ENCODE measurements at regions of chr3 and their contacts with region 1.

Region 1: DNA sequence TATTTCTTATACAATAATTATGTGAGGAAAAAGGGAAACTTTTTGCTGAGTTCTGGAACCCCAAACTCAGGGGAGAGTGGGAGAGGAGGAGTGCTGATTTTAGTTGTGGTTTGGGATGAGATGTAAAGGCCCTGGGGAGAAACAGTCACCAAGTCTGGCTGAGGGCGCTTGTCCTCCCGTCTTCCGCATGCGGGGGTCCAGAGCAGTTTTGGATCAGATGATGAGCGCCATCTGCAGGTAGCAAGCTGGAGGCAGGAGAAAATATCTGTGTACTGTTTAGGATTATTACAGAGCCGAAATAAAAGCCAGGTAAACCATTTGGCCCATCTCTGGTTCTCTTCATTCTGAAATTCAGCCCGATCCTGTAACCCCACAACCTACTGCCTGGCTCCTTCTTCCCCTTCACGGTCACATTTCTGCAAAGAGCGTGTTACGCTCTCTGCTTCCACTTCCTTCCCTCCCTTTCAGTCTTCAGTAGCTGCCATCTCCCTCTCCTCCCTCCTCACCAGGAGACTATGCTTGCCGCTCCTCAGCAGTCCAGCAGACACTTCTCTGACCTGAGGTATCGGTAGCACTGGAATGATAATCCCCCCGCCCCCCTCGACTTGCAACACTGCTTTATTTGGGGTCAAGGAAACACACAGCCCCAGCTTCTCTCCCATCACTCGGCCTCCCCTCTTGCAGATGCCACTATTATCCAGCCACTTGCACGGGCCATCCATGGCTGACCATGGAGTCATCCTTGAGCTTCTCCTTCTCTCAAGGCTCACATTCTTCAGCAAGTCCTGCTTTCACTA is 1.4 kb upstream of the PARP14 start:
- DNase-seq: peak; percentile 52
- ATAC-seq: peak; percentile 45
- H3K4me3 Mint-ChIP-seq: peak overlapping the region; percentile 90
- H3K27ac Mint-ChIP-seq: peak overlapping the region; percentile 87
- H3K4me1 Mint-ChIP-seq: peaks cover 63% of the 10 kb centered on the region
- H3K27me3 Mint-ChIP-seq: no peaks in the 10 kb centered on the region
- CTCF ChIP-seq: no peak

Region 2: GRCh38 chr3:122392868-122393844 is 286.1 kb before region 1 on chr3:
- CTCF ChIA-PET with region 1: interaction called, 16 read pairs
- POLR2A ChIA-PET with region 1: no interaction called
- intact Hi-C with region 1: loop called (anchors 1 kb)
- DNase-seq: no peak
- ATAC-seq: no peak
- H3K4me3 Mint-ChIP-seq: no peak overlapping the region
- H3K27ac Mint-ChIP-seq: no peak overlapping the region
- H3K4me1 Mint-ChIP-seq: peaks cover 15% of the 10 kb centered on the region
- H3K27me3 Mint-ChIP-seq: no peaks in the 10 kb centered on the region
- CTCF ChIP-seq: peak; percentile 87

Region 3: GRCh38 chr3:122514123-122515019 is 164.9 kb before region 1 on chr3 and contains the start of gene KPNA1:
- CTCF ChIA-PET with region 1: no interaction called
- POLR2A ChIA-PET with region 1: interaction called, 4 read pairs
- intact Hi-C with region 1: loop called (anchors 1 kb)
- DNase-seq: peak; percentile 92
- ATAC-seq: peak; percentile 83
- H3K4me3 Mint-ChIP-seq: peak within 1 kb of the TSS; percentile 85
- H3K27ac Mint-ChIP-seq: peak within 1 kb of the TSS; percentile 82
- H3K4me1 Mint-ChIP-seq: peaks cover 42% of the 10 kb centered on the region
- H3K27me3 Mint-ChIP-seq: no peaks in the 10 kb centered on the region
- CTCF ChIP-seq: no peak
- total RNA-seq, gene KPNA1: 72.9 and 76.4 TPM in 2 replicates

Region 4: GRCh38 chr3:122572940-122573412 is 106.3 kb before region 1 on chr3:
- CTCF ChIA-PET with region 1: interaction called, 46 read pairs
- POLR2A ChIA-PET with region 1: interaction called, 81 read pairs
- intact Hi-C with region 1: loop called (anchors 1 kb)
- DNase-seq: no peak
- ATAC-seq: peak; percentile 22
- H3K4me3 Mint-ChIP-seq: peak overlapping the region; percentile 57
- H3K27ac Mint-ChIP-seq: peak overlapping the region; percentile 93
- H3K4me1 Mint-ChIP-seq: peaks cover 80% of the 10 kb centered on the region
- H3K27me3 Mint-ChIP-seq: no peaks in the 10 kb centered on the region
- CTCF ChIP-seq: no peak

Region 5: DNA sequence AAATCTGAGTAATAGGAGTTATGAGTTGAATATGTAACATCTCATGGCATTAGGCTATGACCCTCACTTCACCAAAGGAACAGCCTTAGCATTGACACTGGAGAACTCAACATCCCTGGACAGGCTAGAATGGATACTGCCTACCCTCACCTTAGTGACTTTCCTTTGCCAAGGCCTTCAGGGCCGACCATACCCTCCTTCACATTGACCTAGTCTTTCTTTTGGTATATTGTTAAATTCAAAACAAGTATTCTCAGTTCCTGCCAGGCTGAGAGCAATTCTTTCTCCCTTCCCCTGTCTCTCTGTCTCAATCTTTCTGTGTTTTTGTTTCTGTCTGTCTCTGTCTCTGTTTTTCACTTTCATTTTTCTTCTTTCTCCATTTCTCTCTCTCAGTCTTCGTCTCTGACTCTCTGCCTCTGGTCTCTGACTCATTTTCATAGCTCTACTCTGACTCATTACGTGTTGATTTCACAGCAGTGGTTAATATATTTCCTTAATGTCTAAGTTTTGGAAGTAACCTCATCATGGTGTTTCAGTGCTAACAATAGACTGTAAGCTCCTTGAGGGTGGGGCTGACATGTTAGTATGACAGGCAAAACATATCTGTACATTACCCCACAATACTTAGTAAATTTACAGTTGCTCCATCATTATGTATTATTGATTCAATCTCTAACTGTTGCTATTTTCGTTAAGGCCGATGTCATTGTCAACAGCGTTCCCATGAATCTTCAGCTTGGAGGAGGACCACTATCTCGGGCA is 69.3 kb before region 1 on chr3:
- CTCF ChIA-PET with region 1: interaction called, 3 read pairs
- POLR2A ChIA-PET with region 1: interaction called, 6 read pairs
- intact Hi-C with region 1: loop called (anchors 1 kb)
- DNase-seq: no peak
- ATAC-seq: peak; percentile 88
- H3K4me3 Mint-ChIP-seq: peak overlapping the region; percentile 37
- H3K27ac Mint-ChIP-seq: peak overlapping the region; percentile 80
- H3K4me1 Mint-ChIP-seq: peaks cover 41% of the 10 kb centered on the region
- H3K27me3 Mint-ChIP-seq: no peaks in the 10 kb centered on the region
- CTCF ChIP-seq: no peak

Region 6: GRCh38 chr3:122689587-122689986 is 10.3 kb after region 1 on chr3:
- CTCF ChIA-PET with region 1: interaction called, 45 read pairs
- POLR2A ChIA-PET with region 1: interaction called, 126 read pairs
- intact Hi-C with region 1: loop called (anchors 1 kb)
- DNase-seq: no peak
- ATAC-seq: no peak
- H3K4me3 Mint-ChIP-seq: peak overlapping the region; percentile 5
- H3K27ac Mint-ChIP-seq: no peak overlapping the region
- H3K4me1 Mint-ChIP-seq: peaks cover 44% of the 10 kb centered on the region
- H3K27me3 Mint-ChIP-seq: no peaks in the 10 kb centered on the region
- CTCF ChIP-seq: no peak

Region 7: DNA sequence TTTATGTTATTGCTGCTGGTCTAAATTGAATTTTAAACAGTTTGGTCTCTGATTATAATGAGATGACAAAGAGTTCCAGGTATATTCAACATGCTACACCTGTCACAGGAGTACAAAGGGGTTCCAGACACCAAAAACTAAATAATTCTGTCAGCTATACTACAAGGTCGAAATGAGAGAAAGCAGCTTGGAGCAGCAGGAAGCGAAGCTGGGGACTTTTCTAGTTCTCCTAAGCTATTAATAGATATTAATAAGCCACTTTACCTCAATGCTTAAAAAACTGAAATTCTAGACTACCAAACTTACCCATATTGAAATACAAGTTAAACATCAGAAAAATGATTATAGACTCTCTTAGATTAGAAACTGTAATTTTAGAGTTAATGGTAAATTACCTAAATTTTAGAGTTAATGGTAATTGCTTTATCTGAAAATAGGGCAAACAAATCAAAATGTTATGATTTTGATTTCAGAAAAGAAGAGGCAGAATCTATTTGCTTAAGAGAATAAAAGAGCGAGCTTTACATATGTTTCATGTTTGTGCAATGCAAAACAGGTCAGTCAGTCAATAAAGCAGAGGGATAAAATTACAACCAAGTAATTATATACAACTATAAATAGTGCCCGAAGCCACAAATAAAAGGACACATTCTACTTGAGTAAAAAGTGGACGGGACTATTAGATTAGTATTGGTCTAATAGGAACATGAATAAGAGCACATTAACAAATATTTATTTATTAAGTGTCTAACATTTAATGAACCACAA is 97.6 kb after region 1 on chr3:
- CTCF ChIA-PET with region 1: no interaction called
- POLR2A ChIA-PET with region 1: no interaction called
- intact Hi-C with region 1: no loop called
- DNase-seq: no peak
- ATAC-seq: no peak
- H3K4me3 Mint-ChIP-seq: no peak overlapping the region
- H3K27ac Mint-ChIP-seq: no peak overlapping the region
- H3K4me1 Mint-ChIP-seq: peaks cover 17% of the 10 kb centered on the region
- H3K27me3 Mint-ChIP-seq: no peaks in the 10 kb centered on the region
- CTCF ChIP-seq: no peak

Region 8: DNA sequence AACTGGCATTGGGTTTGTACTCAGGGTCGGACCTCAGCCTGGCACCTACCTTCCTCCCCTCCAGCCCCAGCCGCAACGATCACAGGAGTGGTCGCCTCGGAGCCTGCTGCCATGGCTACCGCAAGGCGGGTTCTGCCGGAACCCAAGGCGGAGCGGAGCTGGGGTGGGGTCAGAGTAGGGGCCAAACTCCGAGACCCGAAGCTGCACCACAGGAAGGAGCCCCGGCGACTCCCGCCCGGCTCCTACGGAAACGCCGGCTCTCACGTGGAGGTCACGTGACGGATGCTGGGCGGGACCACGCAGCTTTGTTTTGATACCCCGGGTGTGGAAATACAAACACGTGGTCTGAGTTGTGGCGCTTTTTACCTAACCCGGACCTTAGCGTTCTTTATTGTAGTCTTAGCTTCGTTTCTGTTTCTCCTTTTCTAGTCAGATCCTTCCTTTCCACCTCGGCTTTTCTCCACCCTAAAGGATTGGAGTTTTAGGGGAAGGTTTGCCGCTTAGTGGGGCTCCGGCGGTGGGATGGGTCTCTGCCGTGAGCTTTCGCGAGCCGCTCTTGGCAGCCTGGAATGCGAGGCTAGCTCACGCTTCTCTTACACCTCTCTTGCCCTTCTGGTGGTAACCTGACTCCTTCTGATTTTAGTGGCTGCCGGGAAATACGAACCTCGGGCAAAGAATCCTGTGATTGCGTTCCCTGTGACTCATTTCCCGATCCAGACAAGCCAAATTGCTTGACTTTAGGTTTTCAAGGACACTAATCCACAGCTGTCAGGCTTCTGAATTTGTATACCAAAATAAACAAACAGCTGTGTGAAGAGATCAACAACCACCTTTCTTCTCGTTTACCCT is 114.5 kb after region 1 on chr3 and contains the start of gene HSPBAP1:
- CTCF ChIA-PET with region 1: no interaction called
- POLR2A ChIA-PET with region 1: interaction called, 4 read pairs
- intact Hi-C with region 1: loop called (anchors 1 kb)
- DNase-seq: peak; percentile 91
- ATAC-seq: peak; percentile 67
- H3K4me3 Mint-ChIP-seq: no peak within 1 kb of the TSS
- H3K27ac Mint-ChIP-seq: peak within 1 kb of the TSS; percentile 86
- H3K4me1 Mint-ChIP-seq: peaks cover 30% of the 10 kb centered on the region
- H3K27me3 Mint-ChIP-seq: no peaks in the 10 kb centered on the region
- CTCF ChIP-seq: no peak
- total RNA-seq, gene HSPBAP1: 18.1 and 20.6 TPM in 2 replicates

Region 9: GRCh38 chr3:122942937-122943827 is 263.9 kb after region 1 on chr3:
- CTCF ChIA-PET with region 1: no interaction called
- POLR2A ChIA-PET with region 1: no interaction called
- intact Hi-C with region 1: no loop called
- DNase-seq: peak; percentile 38
- ATAC-seq: peak; percentile 59
- H3K4me3 Mint-ChIP-seq: no peak overlapping the region
- H3K27ac Mint-ChIP-seq: no peak overlapping the region
- H3K4me1 Mint-ChIP-seq: peaks cover 27% of the 10 kb centered on the region
- H3K27me3 Mint-ChIP-seq: no peaks in the 10 kb centered on the region
- CTCF ChIP-seq: no peak